Calu3 (cell line): ENCODE measurements at regions of chr12 and their contacts with region 1.

Region 1: DNA sequence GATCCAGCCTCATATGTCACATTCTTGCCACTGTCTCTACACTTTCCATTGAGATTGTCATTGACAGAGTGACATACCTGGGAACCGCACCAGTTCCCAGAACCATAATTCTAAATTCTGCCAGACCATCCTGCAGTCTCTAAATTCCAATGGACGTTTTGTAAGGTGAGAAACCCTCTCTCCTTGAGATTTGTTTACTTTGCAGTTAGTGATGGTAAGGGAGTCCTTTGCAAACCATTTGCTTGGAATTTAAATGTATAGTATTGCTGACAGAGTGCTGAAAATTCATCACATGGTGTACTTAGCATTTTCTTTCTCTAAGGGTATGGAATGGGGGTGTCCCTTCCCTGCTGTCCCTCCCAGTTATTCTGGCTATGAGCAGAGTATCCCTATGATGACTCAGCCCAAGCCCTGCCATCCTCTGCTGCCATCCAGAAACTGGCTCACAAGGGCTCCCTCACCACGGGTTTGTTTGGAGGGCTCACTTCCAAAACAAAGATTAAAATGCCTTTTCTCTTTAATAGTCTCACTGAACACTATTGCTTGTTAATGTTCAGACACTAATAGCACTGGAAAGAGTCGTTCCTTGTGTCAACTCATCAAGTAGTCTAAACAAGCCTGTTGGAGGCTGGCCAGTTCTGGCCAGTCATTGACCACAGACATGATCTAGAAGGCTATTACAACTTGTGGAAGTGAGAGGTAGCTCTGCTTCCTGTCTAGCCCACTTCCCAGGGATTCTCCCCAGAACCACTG is 129.0 kb upstream of the HMGA2 start:
- DNase-seq: peak; percentile 80
- H3K4me3 Mint-ChIP-seq: peak overlapping the region; percentile 47
- H3K27ac Mint-ChIP-seq: peak overlapping the region; percentile 72
- H3K4me1 Mint-ChIP-seq: peaks cover 31% of the 10 kb centered on the region
- H3K27me3 Mint-ChIP-seq: no peaks in the 10 kb centered on the region
- CTCF ChIP-seq: no peak

Region 2: DNA sequence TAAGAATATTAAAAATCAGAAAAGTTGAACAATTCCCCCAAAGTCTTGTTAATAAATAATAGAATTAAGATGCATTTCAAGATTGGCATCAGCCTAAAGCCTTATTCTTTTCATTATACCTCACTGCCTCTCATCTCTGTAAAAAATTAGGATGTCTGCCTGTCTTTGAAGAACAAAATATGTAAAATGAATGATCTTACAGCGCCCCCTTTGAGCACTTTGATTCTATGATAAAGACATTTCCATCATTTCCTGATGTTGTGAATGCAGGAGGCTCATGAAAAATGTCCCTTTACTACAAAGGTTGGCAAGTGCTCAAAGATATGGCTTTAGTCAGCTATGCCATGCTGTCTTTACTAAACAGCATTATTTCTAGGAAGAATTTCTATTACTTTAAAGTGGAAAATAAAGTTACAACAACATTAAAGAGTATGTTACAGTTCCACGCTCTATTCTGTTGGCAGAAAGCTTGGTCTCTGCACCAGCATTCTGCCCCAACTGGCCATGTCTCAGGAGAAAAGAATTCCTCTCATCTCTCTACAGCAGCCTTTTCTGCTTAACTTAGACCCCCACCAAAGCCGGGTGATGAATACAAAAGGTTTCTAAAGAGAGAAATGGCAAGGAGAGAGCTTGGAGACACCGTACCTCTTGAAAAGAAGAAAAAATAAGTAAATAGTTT is 340.1 kb after region 1 on chr12:
- CTCF ChIA-PET with region 1: no interaction called
- intact Hi-C with region 1: loop called (anchors 10 kb)
- DNase-seq: peak; percentile 32
- H3K4me3 Mint-ChIP-seq: no peak overlapping the region
- H3K27ac Mint-ChIP-seq: no peak overlapping the region
- H3K4me1 Mint-ChIP-seq: no peaks in the 10 kb centered on the region
- H3K27me3 Mint-ChIP-seq: peaks cover 10% of the 10 kb centered on the region
- CTCF ChIP-seq: peak; percentile 51

Region 3: GRCh38 chr12:66087365-66087943 is 392.2 kb after region 1 on chr12:
- CTCF ChIA-PET with region 1: no interaction called
- intact Hi-C with region 1: loop called (anchors 10 kb)
- DNase-seq: peak; percentile 72
- H3K4me3 Mint-ChIP-seq: no peak overlapping the region
- H3K27ac Mint-ChIP-seq: no peak overlapping the region
- H3K4me1 Mint-ChIP-seq: peaks cover under 1% of the 10 kb centered on the region
- H3K27me3 Mint-ChIP-seq: no peaks in the 10 kb centered on the region
- CTCF ChIP-seq: peak; percentile 68